H1 (cell line): ENCODE measurements at regions of chr6 and their contacts with region 1.

Region 1: GRCh38 chr6:28266962-28267694 is at the start of gene ZSCAN26:
- DNase-seq: peak; percentile 78 to 92
- H3K4me3 ChIP-seq: peak within 1 kb of the TSS; percentile 75 to 80 (median 78)
- H3K27ac ChIP-seq: peak within 1 kb of the TSS; percentile 71
- H3K4me1 ChIP-seq: peaks cover 0 to 2% (median 0%) of the 10 kb centered on the region in 4 experiments; a peak in 1 of 7 replicates
- H3K27me3 ChIP-seq: no peaks in the 10 kb centered on the region
- CTCF ChIP-seq: 0 out of 4 replicates have a peak, but pooled peaks of 1 of the 3 experiments have one; percentile 0
- EP300 ChIP-seq: no peak
- POLR2A ChIP-seq: peak; percentile 65 to 93
- RAD21 ChIP-seq: no peak
- total RNA-seq, gene ZSCAN26: 8.2 and 8.5 TPM in 2 replicates

Region 2: GRCh38 chr6:28171271-28171670 is 95.9 kb before region 1 on chr6:
- CTCF ChIA-PET with region 1: no interaction called
- POLR2A ChIA-PET with region 1: no interaction called
- DNase-seq: no peak
- H3K4me3 ChIP-seq: no peak overlapping the region
- H3K27ac ChIP-seq: no peak overlapping the region
- H3K4me1 ChIP-seq: no peaks in the 10 kb centered on the region
- H3K27me3 ChIP-seq: no peaks in the 10 kb centered on the region; a peak in 1 of 7 replicates
- CTCF ChIP-seq: no peak
- EP300 ChIP-seq: no peak
- POLR2A ChIP-seq: no peak
- RAD21 ChIP-seq: no peak

Region 3: DNA sequence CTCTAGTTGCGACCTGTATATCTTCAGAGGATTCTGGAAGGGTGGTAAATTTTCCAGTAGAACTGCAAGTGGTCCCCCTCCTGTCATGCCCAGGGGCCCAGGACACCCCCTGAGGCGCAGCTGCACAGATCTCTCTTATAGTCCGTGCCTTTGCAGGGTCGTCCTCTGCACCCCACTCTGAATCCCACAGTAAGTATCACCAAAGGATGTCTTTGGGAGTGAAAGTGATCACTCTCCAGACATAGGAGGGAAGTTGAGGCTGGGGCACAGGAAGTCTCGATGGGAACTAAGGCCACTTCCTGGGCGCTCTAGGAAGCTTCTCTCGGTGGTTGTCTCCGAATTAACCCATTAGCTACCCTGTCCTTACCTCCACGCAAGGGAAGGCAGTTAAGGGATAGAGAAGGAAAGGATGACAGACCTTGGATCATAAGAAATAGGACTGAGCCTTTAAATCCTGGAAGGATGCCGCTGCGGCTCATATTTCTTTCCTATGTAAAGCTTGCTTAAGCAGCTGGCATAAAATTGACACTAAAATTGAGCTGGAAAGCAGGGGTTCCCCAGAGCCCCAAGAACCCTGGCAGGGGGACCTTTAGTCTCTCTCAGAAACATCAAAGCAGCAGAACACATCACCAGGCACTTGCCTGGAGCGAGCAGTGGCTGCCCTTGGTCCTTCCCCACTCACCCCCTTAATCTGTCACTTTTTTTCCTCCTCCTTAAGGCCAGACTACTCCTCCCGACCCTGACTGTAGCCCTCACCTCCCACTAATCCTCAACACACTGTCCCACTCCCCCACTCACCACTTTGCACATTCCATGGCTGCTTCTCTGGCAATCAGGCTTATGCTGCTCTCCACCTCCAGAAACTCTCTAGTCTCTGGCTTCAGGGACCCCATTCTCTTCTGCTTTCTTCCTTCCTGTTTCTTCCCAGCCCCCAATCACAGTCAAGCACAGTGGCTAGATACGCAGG is 14.8 kb before region 1 on chr6 and contains the start of gene ZKSCAN4:
- CTCF ChIA-PET with region 1: interaction called, 3 read pairs
- POLR2A ChIA-PET with region 1: interaction called, 31 read pairs
- DNase-seq: peak; percentile 50 to 87
- H3K4me3 ChIP-seq: peak within 1 kb of the TSS; percentile 68 to 97 (median 93)
- H3K27ac ChIP-seq: no peak within 1 kb of the TSS; the same call in 1 of the 2 replicates
- H3K4me1 ChIP-seq: peaks cover 0 to 6% (median 4%) of the 10 kb centered on the region in 4 experiments; a peak in 4 of 7 replicates
- H3K27me3 ChIP-seq: no peaks in the 10 kb centered on the region
- CTCF ChIP-seq: no peak
- EP300 ChIP-seq: no peak
- POLR2A ChIP-seq: no peak
- RAD21 ChIP-seq: no peak
- total RNA-seq, gene ZKSCAN4: 6.6 TPM in 2 replicates

Region 4: GRCh38 chr6:28281288-28282064 is 14.3 kb after region 1 on chr6 and contains the start of gene PGBD1:
- CTCF ChIA-PET with region 1: interaction called, 4 read pairs
- POLR2A ChIA-PET with region 1: interaction called, 21 read pairs
- DNase-seq: peak; percentile 50 to 92
- H3K4me3 ChIP-seq: peak within 1 kb of the TSS; percentile 61 to 95 (median 82)
- H3K27ac ChIP-seq: no peak within 1 kb of the TSS
- H3K4me1 ChIP-seq: peaks cover 0 to 2% (median 0%) of the 10 kb centered on the region in 4 experiments; a peak in 2 of 7 replicates
- H3K27me3 ChIP-seq: no peaks in the 10 kb centered on the region
- CTCF ChIP-seq: no peak
- EP300 ChIP-seq: no peak
- POLR2A ChIP-seq: peak; percentile 60 to 83
- RAD21 ChIP-seq: peak; percentile 9 to 18; a peak in 1 of 4 replicates
- total RNA-seq, gene PGBD1: 7.6 and 9.2 TPM in 2 replicates

Region 5: GRCh38 chr6:28462401-28462800 is 195.3 kb after region 1 on chr6:
- CTCF ChIA-PET with region 1: no interaction called
- POLR2A ChIA-PET with region 1: no interaction called
- DNase-seq: no peak
- H3K4me3 ChIP-seq: no peak overlapping the region
- H3K27ac ChIP-seq: no peak overlapping the region
- H3K4me1 ChIP-seq: no peaks in the 10 kb centered on the region
- H3K27me3 ChIP-seq: peaks cover 0 to 4% (median 1%) of the 10 kb centered on the region in 4 experiments; a peak in 3 of 7 replicates
- CTCF ChIP-seq: no peak
- EP300 ChIP-seq: no peak
- POLR2A ChIP-seq: no peak
- RAD21 ChIP-seq: no peak